AG04449 (cell line): ENCODE measurements at regions of chr17 and their contacts with region 1.

Region 1: GRCh38 chr17:13031718-13032350 is 14.0 kb upstream of the ELAC2 start:
- DNase-seq: no peak
- H3K4me3 ChIP-seq: no peak overlapping the region
- CTCF ChIP-seq: peak; percentile 72

Region 2: DNA sequence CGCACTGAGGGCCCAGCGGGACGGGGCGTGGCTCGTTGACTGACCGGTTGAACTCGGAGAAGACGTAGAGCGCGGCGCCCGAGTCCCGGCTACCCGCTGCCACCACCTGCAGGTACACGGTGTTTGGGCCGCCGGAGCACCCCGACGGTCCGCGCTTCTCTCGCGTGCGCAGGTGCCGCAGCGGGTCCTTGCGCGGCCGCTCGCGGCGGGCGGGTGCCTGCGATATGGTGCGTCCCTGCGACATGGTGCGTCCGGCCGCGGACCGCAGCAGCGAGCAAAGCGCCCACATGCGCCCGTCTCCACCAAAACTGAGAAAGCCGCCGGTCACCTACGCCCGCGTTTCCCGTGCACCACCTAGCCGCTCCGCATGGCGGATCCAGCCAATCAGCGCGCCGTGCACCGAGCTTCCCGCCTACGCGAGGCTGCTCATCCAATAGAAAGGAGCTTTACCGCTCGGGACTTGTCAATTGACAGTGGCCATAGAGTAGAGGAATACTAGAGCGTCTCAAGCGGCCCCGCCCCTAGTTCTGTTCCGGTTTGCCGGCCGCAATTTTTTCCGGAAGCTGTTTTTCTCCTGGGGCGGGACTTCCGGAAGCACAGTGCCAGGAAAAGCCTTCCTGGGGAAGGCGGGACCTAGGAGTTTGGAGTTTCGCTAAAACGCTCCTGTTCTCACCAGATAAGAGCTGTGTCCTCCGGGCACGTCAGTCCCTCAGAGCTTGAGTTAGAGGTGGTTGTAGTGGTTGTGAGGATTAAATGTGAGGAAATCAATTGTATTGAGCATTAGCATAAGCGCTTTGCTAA is 14.0 kb before region 1 on chr17 and contains the start of gene ELAC2:
- CTCF ChIA-PET with region 1: interaction called, 127 read pairs
- POLR2A ChIA-PET with region 1: interaction called, 4 read pairs
- DNase-seq: peak; percentile 96
- H3K4me3 ChIP-seq: peak within 1 kb of the TSS; percentile 82
- CTCF ChIP-seq: no peak

Region 3: DNA sequence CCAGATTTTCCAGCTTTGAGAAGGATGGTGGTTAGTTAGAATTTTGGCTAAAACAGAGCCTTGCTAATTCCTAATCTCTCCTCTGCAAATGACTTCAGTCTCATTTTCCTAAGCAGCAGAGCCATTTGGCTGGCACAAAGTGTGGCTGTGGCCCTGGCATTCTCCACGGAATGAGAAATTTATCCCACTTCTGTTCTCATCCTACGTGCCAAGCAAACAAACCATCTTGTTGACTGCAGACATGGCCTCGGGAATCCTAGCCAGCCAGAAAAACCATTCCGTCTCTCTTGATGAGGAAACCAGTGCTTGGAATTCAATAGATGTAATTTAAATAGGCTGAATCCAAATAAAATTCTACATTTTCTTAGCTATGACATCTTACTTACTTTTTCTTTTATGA is 20.1 kb after region 1 on chr17:
- CTCF ChIA-PET with region 1: interaction called, 169 read pairs
- POLR2A ChIA-PET with region 1: no interaction called
- DNase-seq: no peak
- H3K4me3 ChIP-seq: no peak overlapping the region
- CTCF ChIP-seq: no peak

Region 4: GRCh38 chr17:13086142-13086769 is 54.4 kb after region 1 on chr17:
- CTCF ChIA-PET with region 1: interaction called, 15 read pairs
- POLR2A ChIA-PET with region 1: no interaction called
- DNase-seq: no peak
- H3K4me3 ChIP-seq: no peak overlapping the region
- CTCF ChIP-seq: no peak

Region 5: GRCh38 chr17:13176436-13176835 is 144.6 kb after region 1 on chr17:
- CTCF ChIA-PET with region 1: no interaction called
- POLR2A ChIA-PET with region 1: no interaction called
- DNase-seq: no peak
- H3K4me3 ChIP-seq: no peak overlapping the region
- CTCF ChIP-seq: no peak

Region 6: GRCh38 chr17:13576661-13577526 is 545.1 kb after region 1 on chr17:
- CTCF ChIA-PET with region 1: interaction called, 11 read pairs
- POLR2A ChIA-PET with region 1: no interaction called
- DNase-seq: no peak
- H3K4me3 ChIP-seq: no peak overlapping the region
- CTCF ChIP-seq: no peak